A673 (cell line): ENCODE measurements at regions of chr3 and their contacts with region 1.

Region 1: GRCh38 chr3:115819785-115820384 is 196.6 kb downstream of the GAP43 start:
- DNase-seq: peak; percentile 93
- H3K4me3 ChIP-seq: no peak overlapping the region
- H3K27ac ChIP-seq: peak overlapping the region; percentile 13
- H3K4me1 ChIP-seq: peaks cover 16% of the 10 kb centered on the region
- H3K27me3 ChIP-seq: no peaks in the 10 kb centered on the region
- CTCF ChIP-seq: peak; percentile 100

Region 2: GRCh38 chr3:113844622-113845222 is 1975.2 kb before region 1 on chr3:
- CTCF ChIA-PET with region 1: no interaction called
- POLR2A ChIA-PET with region 1: no interaction called
- intact Hi-C with region 1: loop called (anchors 10 kb)
- DNase-seq: peak; percentile 65
- H3K4me3 ChIP-seq: no peak overlapping the region
- H3K27ac ChIP-seq: no peak overlapping the region
- H3K4me1 ChIP-seq: no peaks in the 10 kb centered on the region
- H3K27me3 ChIP-seq: no peaks in the 10 kb centered on the region
- CTCF ChIP-seq: peak; percentile 73

Region 3: DNA sequence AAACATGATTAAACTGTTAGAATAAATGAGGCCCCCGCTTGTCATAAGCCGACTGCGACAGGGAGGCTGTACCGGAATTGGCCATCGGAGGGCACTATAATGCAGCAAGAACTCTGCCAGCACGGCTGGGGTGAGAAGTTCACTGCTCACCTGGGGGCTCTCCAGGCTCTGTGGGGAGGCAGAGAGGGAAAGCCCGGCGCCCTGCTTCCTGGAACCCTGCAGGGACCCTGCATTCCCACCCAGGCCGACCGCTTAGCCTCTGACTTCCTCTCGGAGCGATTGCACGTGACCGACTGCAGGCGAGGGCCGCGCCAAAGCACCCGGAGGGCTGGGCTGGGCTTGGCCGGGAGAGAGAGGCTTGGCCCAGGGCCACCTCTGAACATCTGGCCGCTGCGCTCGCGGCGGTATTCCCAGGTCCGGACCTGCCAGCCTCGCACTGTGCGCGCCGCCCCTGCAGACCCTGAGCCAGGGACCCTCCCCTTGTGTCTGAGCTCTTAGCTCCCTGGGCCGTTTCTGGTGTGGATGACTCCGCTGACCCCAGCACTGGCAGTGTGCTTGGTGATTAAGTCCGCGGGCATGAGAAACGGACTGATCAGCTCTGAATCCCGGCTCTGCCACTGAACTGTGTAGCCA is 1667.2 kb before region 1 on chr3:
- CTCF ChIA-PET with region 1: no interaction called
- POLR2A ChIA-PET with region 1: no interaction called
- intact Hi-C with region 1: loop called (anchors 5 kb)
- DNase-seq: peak; percentile 90
- H3K4me3 ChIP-seq: peak overlapping the region; percentile 31
- H3K27ac ChIP-seq: no peak overlapping the region
- H3K4me1 ChIP-seq: peaks cover 4% of the 10 kb centered on the region
- H3K27me3 ChIP-seq: peaks cover 4% of the 10 kb centered on the region
- CTCF ChIP-seq: peak; percentile 94

Region 4: DNA sequence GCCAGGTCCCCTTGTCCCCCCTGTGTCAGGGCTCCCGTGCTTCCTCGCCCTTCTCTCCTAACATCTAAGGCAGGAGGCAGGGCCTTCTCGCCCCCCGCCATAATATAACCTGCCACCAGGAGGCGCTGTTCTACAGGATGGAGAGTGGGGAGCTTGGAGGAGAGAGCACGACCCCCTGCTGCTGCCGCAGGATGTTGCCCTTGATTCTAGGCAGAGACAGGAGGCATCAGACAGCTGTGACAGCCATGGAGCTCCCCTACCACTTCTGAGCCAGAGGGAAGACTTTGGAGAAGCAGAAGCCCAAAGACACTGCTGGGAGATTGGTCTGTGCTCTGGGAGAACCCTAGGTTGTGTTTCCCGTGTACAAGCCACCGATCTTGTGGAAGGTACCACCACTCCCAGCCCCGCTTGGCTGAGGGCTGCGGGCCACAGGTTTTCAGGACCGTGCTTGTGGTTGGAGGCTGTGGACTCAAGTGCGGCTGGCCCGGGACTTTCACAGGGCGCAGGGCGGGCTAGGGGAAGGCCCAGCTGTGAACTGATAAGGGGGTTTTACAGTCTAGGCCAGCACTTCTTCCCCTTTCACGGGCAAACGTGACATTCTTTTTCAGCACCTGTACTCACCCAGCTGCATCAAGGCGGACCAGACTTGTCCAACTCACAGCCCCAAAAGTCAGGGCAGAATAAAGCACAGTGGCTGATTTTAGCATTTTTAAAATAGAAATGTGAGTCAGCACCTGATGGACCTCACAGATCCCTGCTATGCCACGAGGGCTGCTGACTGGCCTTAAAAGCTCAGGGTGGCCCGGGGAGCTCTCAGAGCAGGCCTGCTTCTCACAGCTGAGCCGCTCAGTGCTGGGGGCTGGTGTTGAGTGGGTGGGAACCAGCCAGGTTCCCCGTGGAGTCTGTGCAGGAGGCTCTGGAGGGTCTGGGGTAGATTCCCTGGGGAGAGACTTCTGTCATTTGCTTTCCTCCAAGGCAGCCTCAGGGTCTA is 1528.7 kb before region 1 on chr3:
- CTCF ChIA-PET with region 1: no interaction called
- POLR2A ChIA-PET with region 1: no interaction called
- intact Hi-C with region 1: loop called (anchors 5 kb)
- DNase-seq: peak; percentile 94
- H3K4me3 ChIP-seq: no peak overlapping the region
- H3K27ac ChIP-seq: no peak overlapping the region
- H3K4me1 ChIP-seq: no peaks in the 10 kb centered on the region
- H3K27me3 ChIP-seq: no peaks in the 10 kb centered on the region
- CTCF ChIP-seq: peak; percentile 95

Region 5: DNA sequence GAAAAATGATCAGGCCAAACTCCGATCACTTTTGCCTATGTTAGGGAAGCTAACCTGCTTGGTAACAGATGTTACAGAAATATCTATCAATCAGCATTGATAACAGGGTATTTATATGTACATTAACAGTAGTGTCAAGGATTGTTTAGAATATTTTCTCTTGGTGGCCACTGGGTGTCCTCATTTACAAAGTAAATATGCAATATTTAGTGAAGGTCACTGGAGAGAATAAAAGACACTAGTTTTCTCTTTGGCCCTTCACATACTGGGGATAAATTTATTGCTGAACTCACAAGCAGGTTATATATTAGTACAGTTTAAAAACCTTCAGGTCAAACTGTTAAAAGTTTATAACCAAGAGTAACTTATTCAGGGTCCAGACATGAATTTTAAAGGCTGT is 1457.1 kb before region 1 on chr3:
- CTCF ChIA-PET with region 1: no interaction called
- POLR2A ChIA-PET with region 1: no interaction called
- intact Hi-C with region 1: loop called (anchors 10 kb)
- DNase-seq: peak; percentile 69
- H3K4me3 ChIP-seq: no peak overlapping the region
- H3K27ac ChIP-seq: no peak overlapping the region
- H3K4me1 ChIP-seq: peaks cover 12% of the 10 kb centered on the region
- H3K27me3 ChIP-seq: no peaks in the 10 kb centered on the region
- CTCF ChIP-seq: peak; percentile 71

Region 6: DNA sequence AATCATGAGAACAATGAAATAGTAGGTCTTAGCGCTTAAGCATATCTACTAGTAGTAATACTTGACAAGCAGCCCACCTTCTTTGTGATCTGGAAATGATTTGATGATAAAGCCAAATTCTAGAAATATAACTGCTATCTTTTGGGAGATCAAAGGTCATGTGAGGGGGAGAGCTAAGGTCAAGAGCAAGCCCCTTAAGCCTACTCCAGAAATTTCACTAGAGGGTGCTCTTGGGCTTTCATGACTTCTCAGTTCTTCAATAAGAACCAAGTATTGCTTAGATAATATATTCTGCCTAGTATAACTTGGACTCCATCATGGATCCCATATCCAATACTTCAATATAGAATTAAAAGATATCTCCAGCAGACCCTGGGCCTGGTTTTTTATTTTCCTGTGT is 992.4 kb before region 1 on chr3:
- CTCF ChIA-PET with region 1: no interaction called
- POLR2A ChIA-PET with region 1: no interaction called
- intact Hi-C with region 1: loop called (anchors 2 kb)
- DNase-seq: peak; percentile 61
- H3K4me3 ChIP-seq: no peak overlapping the region
- H3K27ac ChIP-seq: no peak overlapping the region
- H3K4me1 ChIP-seq: no peaks in the 10 kb centered on the region
- H3K27me3 ChIP-seq: no peaks in the 10 kb centered on the region
- CTCF ChIP-seq: peak; percentile 64

Region 7: GRCh38 chr3:115960799-115961198 is 140.9 kb after region 1 on chr3:
- CTCF ChIA-PET with region 1: no interaction called
- POLR2A ChIA-PET with region 1: no interaction called
- intact Hi-C with region 1: no loop called
- DNase-seq: peak; percentile 9
- H3K4me3 ChIP-seq: no peak overlapping the region
- H3K27ac ChIP-seq: no peak overlapping the region
- H3K4me1 ChIP-seq: peaks cover 6% of the 10 kb centered on the region
- H3K27me3 ChIP-seq: no peaks in the 10 kb centered on the region
- CTCF ChIP-seq: no peak

Region 8: DNA sequence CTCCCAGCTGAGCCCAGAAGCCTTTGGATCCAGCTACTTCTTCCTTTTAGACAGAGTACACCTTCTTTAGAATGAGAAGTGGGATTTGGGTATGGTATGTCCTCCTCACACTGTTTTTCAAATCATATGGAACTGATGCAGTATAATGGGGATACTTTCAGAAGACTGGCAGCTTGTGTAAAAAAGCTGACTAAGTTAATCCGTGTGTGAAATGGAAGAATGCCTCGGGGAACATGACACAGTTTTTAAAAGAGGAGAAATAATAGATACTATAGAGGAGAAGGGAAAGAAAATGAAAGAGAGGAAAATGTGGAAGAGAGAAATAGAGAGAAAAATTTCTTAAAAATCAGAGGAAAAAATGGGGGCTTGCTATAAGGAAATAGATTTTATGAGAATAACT is 937.4 kb after region 1 on chr3:
- CTCF ChIA-PET with region 1: no interaction called
- POLR2A ChIA-PET with region 1: no interaction called
- intact Hi-C with region 1: loop called (anchors 2 kb)
- DNase-seq: peak; percentile 32
- H3K4me3 ChIP-seq: no peak overlapping the region
- H3K27ac ChIP-seq: no peak overlapping the region
- H3K4me1 ChIP-seq: peaks cover 22% of the 10 kb centered on the region
- H3K27me3 ChIP-seq: no peaks in the 10 kb centered on the region
- CTCF ChIP-seq: no peak